Activated CD8-positive, alpha-beta memory T cell treated with anti-CD3 and anti-CD28 coated beads, Interleukin-2, amount 10 ng/mL, durations not matched to agents 7 days and 5 days (primary cell): ENCODE measurements at regions of chr20 and their contacts with region 1.

Region 1: GRCh38 chr20:46520976-46521579 is 7.7 kb upstream of the ZNF334 start:
- DNase-seq: peak; percentile 75
- ATAC-seq: peak; percentile 81
- H3K4me3 Mint-ChIP-seq: no peak overlapping the region
- H3K27ac Mint-ChIP-seq: no peak overlapping the region
- H3K4me1 Mint-ChIP-seq: no peaks in the 10 kb centered on the region
- H3K27me3 Mint-ChIP-seq: peaks cover 19% of the 10 kb centered on the region

Region 2: DNA sequence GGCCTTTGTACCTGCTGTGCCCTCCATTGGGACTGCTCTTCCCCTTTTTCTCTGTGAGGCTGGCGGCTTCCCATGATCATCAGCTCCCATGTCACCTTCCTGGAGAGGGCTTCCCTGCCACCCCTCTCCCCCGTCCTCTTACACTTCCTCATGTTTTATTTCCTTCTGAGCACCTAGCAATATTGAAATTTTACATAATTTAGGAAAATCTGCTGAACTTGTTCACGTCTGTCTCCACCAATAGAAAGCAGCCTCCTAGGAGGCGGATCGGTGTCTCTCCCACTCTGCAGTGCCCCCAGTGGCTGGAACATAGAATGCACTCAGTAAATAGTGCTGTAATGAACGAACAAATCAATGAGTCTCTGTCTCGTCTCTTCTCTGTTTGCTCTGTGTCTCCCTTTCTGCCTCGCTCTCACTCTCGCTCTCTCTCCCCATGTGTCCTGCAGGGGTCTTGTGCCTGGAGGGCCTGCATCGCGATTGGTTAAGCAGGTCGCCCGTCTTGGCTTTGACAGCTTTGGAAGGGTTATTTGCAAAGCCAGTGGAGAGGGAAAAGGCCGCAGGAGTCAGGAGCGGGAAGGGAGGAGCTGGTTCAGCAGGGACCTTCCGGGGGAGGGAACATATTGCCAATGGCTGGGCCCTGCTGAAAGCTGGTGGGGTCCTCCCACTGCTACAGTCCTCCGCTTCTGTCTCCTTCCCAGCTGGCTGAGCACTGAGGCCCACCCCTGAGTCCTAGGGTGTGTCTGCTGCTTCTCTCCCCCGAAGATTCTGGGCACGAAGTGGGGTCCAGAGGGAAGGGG is 41.5 kb after region 1 on chr20:
- CTCF ChIA-PET with region 1: interaction called, 11 read pairs
- DNase-seq: peak; percentile 81
- ATAC-seq: peak; percentile 79
- H3K4me3 Mint-ChIP-seq: no peak overlapping the region
- H3K27ac Mint-ChIP-seq: no peak overlapping the region
- H3K4me1 Mint-ChIP-seq: peaks cover 29% of the 10 kb centered on the region
- H3K27me3 Mint-ChIP-seq: peaks cover 5% of the 10 kb centered on the region

Region 3: DNA sequence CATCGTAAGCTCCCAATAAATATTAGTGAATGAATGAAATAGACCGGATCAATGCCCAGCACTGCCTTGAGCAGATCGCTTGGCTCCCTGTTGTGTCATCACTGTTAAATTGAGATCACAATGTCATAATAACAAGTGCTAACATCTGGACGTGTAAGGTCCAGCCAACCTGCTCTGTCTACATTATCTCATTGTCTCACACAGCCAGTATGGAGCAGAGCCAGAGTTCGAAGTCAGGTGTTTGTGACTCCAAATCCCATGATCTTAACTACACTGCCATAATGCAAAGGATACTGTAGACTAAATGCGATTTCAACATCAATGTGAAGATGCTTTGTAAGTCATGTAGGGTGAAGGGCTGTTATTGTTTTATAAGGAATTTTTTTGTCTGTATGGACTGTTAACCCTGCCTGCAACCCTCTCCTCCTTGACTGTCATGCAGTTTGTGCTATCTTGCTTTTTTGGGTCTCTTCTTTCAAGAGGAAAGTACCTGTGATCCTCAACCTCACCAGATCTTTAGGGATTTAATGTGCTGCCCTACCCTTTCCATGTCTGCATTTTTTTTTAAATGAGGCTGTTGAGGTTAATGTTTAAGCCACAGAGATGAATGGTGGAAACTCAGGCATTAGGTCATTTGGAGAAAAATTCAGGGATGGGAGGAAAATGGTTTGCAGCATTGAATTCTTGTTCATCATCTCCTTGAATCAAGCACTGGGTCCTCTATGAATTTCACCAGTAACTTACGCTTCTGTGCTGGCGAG is 78.3 kb after region 1 on chr20:
- CTCF ChIA-PET with region 1: no interaction called
- DNase-seq: no peak
- ATAC-seq: no peak
- H3K4me3 Mint-ChIP-seq: no peak overlapping the region
- H3K27ac Mint-ChIP-seq: no peak overlapping the region
- H3K4me1 Mint-ChIP-seq: peaks cover 24% of the 10 kb centered on the region
- H3K27me3 Mint-ChIP-seq: peaks cover 31% of the 10 kb centered on the region

Region 4: DNA sequence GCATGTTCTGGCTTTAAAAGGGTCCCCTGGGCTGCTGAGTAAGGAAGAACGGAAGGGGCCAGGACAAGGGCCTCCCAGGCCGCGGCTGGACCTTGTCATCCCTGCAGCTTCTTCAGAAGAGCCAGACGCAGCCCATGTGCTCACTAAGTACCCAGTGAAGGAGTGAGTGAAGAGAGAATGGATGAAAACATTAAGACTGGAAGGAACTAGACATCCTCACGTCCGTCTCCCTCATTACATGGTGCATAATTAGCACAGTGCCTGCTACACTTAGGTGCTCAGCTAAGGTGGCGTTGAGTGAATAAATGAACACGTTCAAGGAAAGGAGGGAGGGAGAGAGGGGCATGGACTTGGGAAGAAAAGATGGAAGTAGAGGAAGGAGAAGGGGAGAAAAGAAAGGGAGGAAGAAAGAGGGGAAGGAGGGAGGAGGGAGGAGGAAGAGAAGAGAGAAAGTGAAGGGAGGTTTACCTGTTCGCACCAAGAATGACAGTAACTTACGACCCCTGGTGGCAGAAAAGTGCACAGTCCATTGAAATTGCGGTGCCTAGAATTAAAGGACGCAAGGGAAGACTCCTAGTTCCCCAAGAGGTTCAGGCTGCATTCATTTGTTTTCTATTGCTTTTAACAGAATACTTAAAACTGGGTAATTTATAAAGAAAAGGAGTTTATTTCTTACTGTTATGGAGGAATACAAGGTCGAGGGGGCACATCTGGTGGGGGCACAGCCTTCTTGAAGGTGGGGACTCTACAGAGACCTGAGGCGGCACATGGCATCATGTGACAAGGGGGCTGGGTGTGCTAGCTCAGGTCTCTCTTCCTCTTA is 160.2 kb after region 1 on chr20:
- CTCF ChIA-PET with region 1: interaction called, 10 read pairs
- DNase-seq: peak; percentile 81
- ATAC-seq: peak; percentile 69
- H3K4me3 Mint-ChIP-seq: no peak overlapping the region
- H3K27ac Mint-ChIP-seq: peak overlapping the region; percentile 45
- H3K4me1 Mint-ChIP-seq: peaks cover 32% of the 10 kb centered on the region
- H3K27me3 Mint-ChIP-seq: no peaks in the 10 kb centered on the region

Region 5: DNA sequence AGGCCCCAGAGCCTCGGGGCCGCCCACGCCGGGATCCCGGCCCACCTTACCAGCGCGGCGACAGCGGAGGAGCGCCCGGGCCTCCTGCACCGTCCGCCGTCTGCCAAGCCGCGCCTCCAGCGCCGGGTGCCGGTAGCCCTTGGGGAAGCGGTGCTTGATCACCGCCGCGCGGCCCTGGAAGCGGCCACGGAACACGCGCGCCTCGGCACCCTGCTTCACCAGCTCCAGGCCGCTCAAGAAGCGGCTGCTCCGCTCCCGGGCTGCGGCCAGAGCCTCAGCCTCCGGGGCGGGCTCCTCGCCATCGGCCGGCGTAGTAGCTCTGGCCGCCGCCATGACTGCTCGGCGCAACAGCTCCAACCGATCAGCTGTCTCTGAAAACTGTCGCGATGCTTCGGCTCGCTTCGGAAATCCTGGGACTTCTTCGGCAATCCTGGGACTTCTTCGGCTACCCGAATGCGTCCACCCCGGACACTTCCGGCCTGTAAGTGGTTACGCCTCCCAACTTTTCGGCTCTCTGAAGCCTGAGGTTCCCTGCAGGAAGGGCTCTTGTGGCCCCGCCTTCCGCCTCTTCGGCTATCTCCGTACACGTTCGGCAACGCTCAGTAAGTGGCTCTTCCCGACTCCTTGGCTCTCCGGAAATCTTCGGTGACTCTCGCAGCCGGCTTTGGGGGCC is 168.1 kb after region 1 on chr20 and contains the start of gene TP53RK:
- CTCF ChIA-PET with region 1: interaction called, 13 read pairs
- DNase-seq: peak; percentile 99
- ATAC-seq: peak; percentile 98
- H3K4me3 Mint-ChIP-seq: peak within 1 kb of the TSS; percentile 95
- H3K27ac Mint-ChIP-seq: peak within 1 kb of the TSS; percentile 93
- H3K4me1 Mint-ChIP-seq: peaks cover 38% of the 10 kb centered on the region
- H3K27me3 Mint-ChIP-seq: no peaks in the 10 kb centered on the region
- total RNA-seq, gene TP53RK: 14.8 to 20.9 TPM